SK-N-SH (cell line): ENCODE measurements at regions of chr22 and their contacts with region 1.

Region 1: GRCh38 chr22:28019881-28020871 is 101.1 kb upstream of the PITPNB start:
- DNase-seq: peak; percentile 89
- H3K4me3 ChIP-seq: peak overlapping the region in 1 of 2 experiments; percentile 18; a peak in 1 of 4 replicates
- H3K27ac ChIP-seq: peak overlapping the region; percentile 4 to 91; a peak in 3 of 4 replicates
- H3K4me1 ChIP-seq: peaks cover 8 to 99% of the 10 kb centered on the region in 2 experiments; a peak in 3 of 4 replicates
- H3K27me3 ChIP-seq: no peaks in the 10 kb centered on the region
- CTCF ChIP-seq: peak; percentile 96
- EP300 ChIP-seq: no peak
- RAD21 ChIP-seq: peak; percentile 93

Region 2: DNA sequence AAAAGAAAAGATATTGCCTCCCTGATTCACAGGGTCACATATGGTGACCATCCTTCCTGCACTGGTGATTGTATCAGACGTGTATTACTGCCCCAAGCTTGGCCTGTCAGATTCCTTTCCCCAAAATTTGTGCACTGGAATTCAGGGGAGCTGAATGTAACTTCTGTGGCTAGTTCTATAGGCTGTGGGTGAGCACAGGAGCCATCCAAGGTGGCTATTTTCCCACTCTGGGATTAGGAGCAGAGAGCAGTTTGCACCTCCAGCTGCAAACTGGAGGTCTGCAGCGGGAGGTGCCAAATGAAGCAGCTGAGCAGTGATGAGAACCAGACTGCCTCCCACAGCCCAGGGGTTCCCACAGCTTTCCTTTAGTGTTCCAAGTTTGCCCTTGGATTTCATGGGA is 23.1 kb after region 1 on chr22:
- CTCF ChIA-PET with region 1: interaction called, 61 read pairs
- POLR2A ChIA-PET with region 1: no interaction called
- DNase-seq: peak; percentile 52
- H3K4me3 ChIP-seq: no peak overlapping the region
- H3K27ac ChIP-seq: peak overlapping the region in 1 of 2 experiments; percentile 82; a peak in 2 of 4 replicates
- H3K4me1 ChIP-seq: peaks cover 0 to 19% of the 10 kb centered on the region in 2 experiments; a peak in 2 of 4 replicates
- H3K27me3 ChIP-seq: no peaks in the 10 kb centered on the region
- CTCF ChIP-seq: no peak
- EP300 ChIP-seq: peak in 1 of 2 experiments; percentile 67; a peak in 2 of 4 replicates
- RAD21 ChIP-seq: no peak; the same call in 1 of the 2 replicates

Region 3: GRCh38 chr22:28120691-28121592 is 100.8 kb after region 1 on chr22:
- CTCF ChIA-PET with region 1: interaction called, 13 read pairs
- POLR2A ChIA-PET with region 1: no interaction called
- DNase-seq: no peak
- H3K4me3 ChIP-seq: no peak overlapping the region
- H3K27ac ChIP-seq: peak overlapping the region in 1 of 2 experiments; percentile 78; a peak in 2 of 4 replicates
- H3K4me1 ChIP-seq: peaks cover 14 to 17% of the 10 kb centered on the region in 2 experiments
- H3K27me3 ChIP-seq: no peaks in the 10 kb centered on the region
- CTCF ChIP-seq: no peak
- EP300 ChIP-seq: no peak
- RAD21 ChIP-seq: no peak

Region 4: GRCh38 chr22:28442264-28442710 is 422.1 kb after region 1 on chr22:
- CTCF ChIA-PET with region 1: interaction called, 74 read pairs
- POLR2A ChIA-PET with region 1: interaction called, 4 read pairs
- DNase-seq: peak; percentile 91
- H3K4me3 ChIP-seq: peak overlapping the region; percentile 67 to 76
- H3K27ac ChIP-seq: peak overlapping the region; percentile 62 to 91; a peak in 3 of 4 replicates
- H3K4me1 ChIP-seq: peaks cover 13 to 27% of the 10 kb centered on the region in 2 experiments; a peak in 3 of 4 replicates
- H3K27me3 ChIP-seq: no peaks in the 10 kb centered on the region
- CTCF ChIP-seq: peak; percentile 80
- EP300 ChIP-seq: peak in 1 of 2 experiments; percentile 37; a peak in 1 of 4 replicates
- RAD21 ChIP-seq: peak; percentile 87

Region 5: DNA sequence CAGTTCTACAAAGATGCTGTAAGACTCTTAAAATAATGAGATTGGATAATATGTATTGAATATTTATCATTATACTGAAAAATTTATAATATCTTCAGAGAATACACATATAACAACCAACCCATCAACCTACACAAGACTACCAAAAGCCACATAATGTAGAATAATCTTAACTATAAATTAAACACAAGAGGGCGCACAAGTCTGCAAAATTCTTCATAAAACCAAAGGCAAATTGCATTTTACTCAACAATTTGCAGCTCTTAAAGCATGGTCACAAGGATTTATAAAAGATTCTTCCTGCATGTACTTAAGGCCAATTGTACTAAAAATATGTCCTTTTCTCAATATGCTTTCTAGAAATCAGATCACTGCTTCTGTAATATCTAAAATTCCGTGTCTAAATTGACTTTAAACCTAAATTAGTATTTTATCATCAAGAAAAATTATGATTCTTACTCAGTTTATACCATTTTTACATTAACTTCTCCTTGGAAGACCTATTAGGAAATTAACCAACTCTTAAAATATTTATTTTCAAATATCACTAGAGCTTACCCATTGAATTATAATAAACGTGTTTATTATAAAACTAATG is 580.5 kb after region 1 on chr22:
- CTCF ChIA-PET with region 1: interaction called, 21 read pairs
- POLR2A ChIA-PET with region 1: no interaction called
- DNase-seq: peak; percentile 25
- H3K4me3 ChIP-seq: no peak overlapping the region; a peak in 1 of 4 replicates
- H3K27ac ChIP-seq: no peak overlapping the region
- H3K4me1 ChIP-seq: peaks cover 0 to 3% of the 10 kb centered on the region in 2 experiments; a peak in 2 of 4 replicates
- H3K27me3 ChIP-seq: no peaks in the 10 kb centered on the region
- CTCF ChIP-seq: peak; percentile 63
- EP300 ChIP-seq: no peak
- RAD21 ChIP-seq: peak; percentile 87